ENCODE measurements at regions of chr5 and their contacts with region 1.

Region 1: GRCh38 chr5:148179234-148179824 is 11.0 kb downstream of the SPINK14 start:
- DNase-seq: peak; percentile 4
- ATAC-seq: peak; percentile 77
- H3K4me3 ChIP-seq: no peak overlapping the region
- H3K27ac ChIP-seq: no peak overlapping the region
- H3K4me1 ChIP-seq: no peaks in the 10 kb centered on the region
- H3K27me3 ChIP-seq: no peaks in the 10 kb centered on the region
- CTCF ChIP-seq: peak; percentile 57 to 75 (median 61); a peak in 5 of 6 replicates
- EP300 ChIP-seq: no peak
- POLR2A ChIP-seq: no peak
- RAD21 ChIP-seq: peak; percentile 87

Region 2: DNA sequence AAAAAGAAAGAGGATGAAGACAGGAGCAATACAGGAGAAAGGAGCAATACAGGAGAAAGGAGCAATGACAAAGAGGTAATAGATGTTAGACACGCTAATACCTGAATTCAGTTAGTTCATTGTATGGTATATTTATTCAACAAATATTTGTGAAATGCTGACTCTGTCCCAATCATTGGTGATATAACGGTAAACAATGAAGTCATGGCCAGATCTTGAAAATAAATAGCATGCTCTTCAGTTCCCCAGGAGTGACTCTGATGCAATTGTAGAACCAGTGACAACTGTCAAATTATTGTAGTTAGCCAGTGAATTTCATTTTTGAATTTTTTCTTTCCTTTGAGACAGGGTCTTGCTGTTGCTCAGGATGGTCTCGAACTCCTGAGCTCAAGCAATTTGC is 59.0 kb before region 1 on chr5:
- CTCF ChIA-PET with region 1: no interaction called
- POLR2A ChIA-PET with region 1: no interaction called
- RAD21 ChIA-PET with region 1: no interaction called
- SMC1A ChIA-PET with region 1: no interaction called
- in situ Hi-C with region 1: no loop called
- intact Hi-C with region 1: no loop called
- DNase-seq: no peak
- ATAC-seq: no peak
- H3K4me3 ChIP-seq: no peak overlapping the region
- H3K27ac ChIP-seq: no peak overlapping the region
- H3K4me1 ChIP-seq: no peaks in the 10 kb centered on the region
- H3K27me3 ChIP-seq: no peaks in the 10 kb centered on the region
- CTCF ChIP-seq: no peak
- EP300 ChIP-seq: no peak
- POLR2A ChIP-seq: no peak
- RAD21 ChIP-seq: no peak

Region 3: DNA sequence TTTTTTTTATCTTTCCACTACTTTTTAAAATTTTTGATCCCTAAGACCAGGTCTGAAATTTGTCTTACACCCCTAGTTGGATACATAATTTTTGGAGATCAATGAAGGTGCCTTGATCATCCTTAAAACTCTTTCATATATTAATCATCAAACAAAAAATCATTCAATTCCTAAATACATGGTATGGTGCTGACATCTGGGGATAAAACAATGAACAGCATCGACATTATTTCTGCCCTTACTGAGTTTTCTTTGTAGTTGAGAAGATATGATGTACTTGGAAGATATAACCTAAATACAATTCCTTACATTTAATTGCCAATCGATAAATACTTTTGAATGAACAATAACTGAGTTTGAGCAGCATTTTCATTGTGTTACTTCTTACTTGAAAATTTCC is 174.3 kb after region 1 on chr5:
- CTCF ChIA-PET with region 1: interaction called, 5 read pairs
- POLR2A ChIA-PET with region 1: no interaction called
- RAD21 ChIA-PET with region 1: no interaction called
- SMC1A ChIA-PET with region 1: no interaction called
- in situ Hi-C with region 1: no loop called
- intact Hi-C with region 1: loop called (anchors 5 kb)
- DNase-seq: no peak
- ATAC-seq: no peak
- H3K4me3 ChIP-seq: no peak overlapping the region
- H3K27ac ChIP-seq: no peak overlapping the region
- H3K4me1 ChIP-seq: no peaks in the 10 kb centered on the region
- H3K27me3 ChIP-seq: no peaks in the 10 kb centered on the region
- CTCF ChIP-seq: peak in 1 of 3 experiments; percentile 14; a peak in 1 of 6 replicates
- EP300 ChIP-seq: no peak
- POLR2A ChIP-seq: no peak
- RAD21 ChIP-seq: no peak

Region 4: GRCh38 chr5:148457183-148457620 is 277.9 kb after region 1 on chr5:
- CTCF ChIA-PET with region 1: interaction called, 3 read pairs
- POLR2A ChIA-PET with region 1: no interaction called
- RAD21 ChIA-PET with region 1: no interaction called
- SMC1A ChIA-PET with region 1: no interaction called
- in situ Hi-C with region 1: no loop called
- intact Hi-C with region 1: loop called (anchors 10 kb)
- DNase-seq: no peak
- ATAC-seq: peak; percentile 91
- H3K4me3 ChIP-seq: no peak overlapping the region
- H3K27ac ChIP-seq: no peak overlapping the region
- H3K4me1 ChIP-seq: no peaks in the 10 kb centered on the region
- H3K27me3 ChIP-seq: no peaks in the 10 kb centered on the region
- CTCF ChIP-seq: peak; percentile 29 to 42 (median 33); a peak in 3 of 6 replicates
- EP300 ChIP-seq: no peak
- POLR2A ChIP-seq: no peak
- RAD21 ChIP-seq: 0 out of 2 replicates have a peak, but pooled peaks have one; percentile 10

Measured in GM12878 (cell line).